ENCODE measurements at regions of chr20 and their contacts with region 1.

Region 1: GRCh38 chr20:36199345-36200257 is 36.7 kb upstream of the AAR2 start:
- DNase-seq: peak; percentile 58
- ATAC-seq: peak; percentile 89
- H3K4me3 Mint-ChIP-seq: no peak overlapping the region
- H3K27ac Mint-ChIP-seq: no peak overlapping the region
- H3K4me1 Mint-ChIP-seq: peaks cover 8% of the 10 kb centered on the region
- H3K27me3 Mint-ChIP-seq: peaks cover 3% of the 10 kb centered on the region
- CTCF ChIP-seq: no peak

Region 2: DNA sequence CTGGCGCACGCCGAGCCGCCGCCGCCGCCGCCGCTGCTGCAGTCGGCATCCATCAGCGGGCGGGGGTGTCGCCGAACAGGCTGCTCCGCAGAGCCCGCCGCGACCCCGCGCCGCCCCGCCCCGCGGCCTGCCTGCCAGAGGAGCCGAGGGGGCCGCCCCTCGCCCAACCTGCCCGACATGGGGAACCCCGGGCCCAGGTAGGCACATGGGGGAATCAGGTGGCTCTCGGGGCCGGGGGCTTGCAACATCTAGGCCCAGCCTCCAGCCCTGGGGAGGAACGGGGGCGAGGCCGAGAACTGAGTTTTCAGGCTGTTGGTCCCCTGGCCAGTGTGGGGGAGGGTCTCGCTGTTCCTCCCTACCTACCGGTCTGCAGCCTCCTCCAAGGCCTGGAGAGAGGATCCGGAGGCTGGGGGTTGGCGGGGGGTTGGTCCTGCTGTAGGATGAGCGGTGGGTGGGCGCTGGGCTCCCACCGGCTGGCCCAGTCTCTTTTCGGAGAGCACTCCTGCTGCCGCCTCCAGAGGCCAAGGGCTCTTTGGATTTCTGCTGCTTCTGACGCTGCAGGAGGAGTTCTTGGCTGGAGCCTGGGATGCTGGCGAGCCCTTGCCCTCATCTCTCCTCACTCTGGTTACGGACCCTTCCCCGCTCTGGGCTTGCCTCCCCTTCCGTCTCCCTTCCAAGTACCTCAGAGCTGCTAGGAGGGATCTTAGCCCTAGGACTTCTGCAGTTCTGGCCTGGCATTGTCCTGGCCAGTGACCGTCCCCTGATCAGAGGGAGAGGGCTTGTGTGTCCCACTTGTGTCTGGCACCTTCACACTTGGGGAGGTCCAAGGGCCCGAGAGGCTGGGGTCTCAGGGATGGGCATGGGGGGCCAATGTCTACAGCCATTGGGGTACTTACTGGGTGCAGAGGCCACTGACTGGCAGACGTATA is 44.6 kb before region 1 on chr20 and contains the start of gene EPB41L1:
- CTCF ChIA-PET with region 1: interaction called, 26 read pairs
- POLR2A ChIA-PET with region 1: no interaction called
- intact Hi-C with region 1: loop called (anchors 1 kb)
- DNase-seq: no peak
- ATAC-seq: no peak
- H3K4me3 Mint-ChIP-seq: peak within 1 kb of the TSS; percentile 59
- H3K27ac Mint-ChIP-seq: no peak within 1 kb of the TSS
- H3K4me1 Mint-ChIP-seq: peaks cover 12% of the 10 kb centered on the region
- H3K27me3 Mint-ChIP-seq: peaks cover 23% of the 10 kb centered on the region
- CTCF ChIP-seq: no peak
- total RNA-seq, gene EPB41L1: 0.49 and 0.64 TPM in 2 replicates

Region 3: GRCh38 chr20:36235892-36236785 is 36.5 kb after region 1 on chr20 and contains the start of gene AAR2:
- CTCF ChIA-PET with region 1: interaction called, 5 read pairs
- POLR2A ChIA-PET with region 1: no interaction called
- intact Hi-C with region 1: loop called (anchors 2 kb)
- DNase-seq: peak; percentile 67
- ATAC-seq: peak; percentile 95
- H3K4me3 Mint-ChIP-seq: peak within 1 kb of the TSS; percentile 94
- H3K27ac Mint-ChIP-seq: peak within 1 kb of the TSS; percentile 86
- H3K4me1 Mint-ChIP-seq: peaks cover 34% of the 10 kb centered on the region
- H3K27me3 Mint-ChIP-seq: peaks cover 9% of the 10 kb centered on the region
- CTCF ChIP-seq: no peak
- total RNA-seq, gene AAR2: 25.9 and 27.4 TPM in 2 replicates

Region 4: DNA sequence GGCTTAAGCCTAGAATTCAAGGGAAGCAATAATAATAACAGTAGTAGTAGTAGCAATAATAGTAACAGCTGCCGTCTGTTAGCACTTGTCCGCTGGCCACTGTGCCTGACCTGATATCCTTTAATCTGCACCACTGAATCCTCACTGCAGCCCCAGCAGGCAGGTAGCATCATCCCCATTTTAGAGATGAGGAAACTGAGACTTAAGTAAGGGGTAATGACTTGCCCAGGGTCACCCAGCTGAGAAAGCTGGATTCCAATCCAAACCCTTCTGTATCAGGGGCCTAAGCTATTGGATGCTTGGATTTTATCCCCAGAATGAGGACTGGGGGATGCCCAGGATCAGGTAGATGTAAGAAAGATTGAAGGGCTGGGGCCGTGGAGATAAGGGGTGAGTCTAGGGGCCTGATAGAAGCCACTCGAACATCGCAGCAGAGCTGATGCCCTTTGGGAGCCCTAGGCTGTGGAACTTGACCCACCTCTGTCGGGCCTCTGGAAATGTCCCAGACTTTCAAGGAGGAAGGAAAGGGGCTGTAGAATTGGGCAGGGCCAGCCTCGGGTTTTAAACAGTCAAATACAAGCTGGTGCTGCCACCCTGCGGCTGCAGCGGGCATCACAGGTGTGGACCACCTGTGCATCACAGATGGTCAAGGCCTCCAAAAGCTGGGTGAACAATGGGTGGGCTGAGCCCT is 239.6 kb after region 1 on chr20:
- CTCF ChIA-PET with region 1: interaction called, 14 read pairs
- POLR2A ChIA-PET with region 1: no interaction called
- intact Hi-C with region 1: loop called (anchors 1 kb)
- DNase-seq: peak; percentile 58
- ATAC-seq: peak; percentile 48
- H3K4me3 Mint-ChIP-seq: no peak overlapping the region
- H3K27ac Mint-ChIP-seq: no peak overlapping the region
- H3K4me1 Mint-ChIP-seq: peaks cover 10% of the 10 kb centered on the region
- H3K27me3 Mint-ChIP-seq: peaks cover 4% of the 10 kb centered on the region
- CTCF ChIP-seq: no peak

Region 5: DNA sequence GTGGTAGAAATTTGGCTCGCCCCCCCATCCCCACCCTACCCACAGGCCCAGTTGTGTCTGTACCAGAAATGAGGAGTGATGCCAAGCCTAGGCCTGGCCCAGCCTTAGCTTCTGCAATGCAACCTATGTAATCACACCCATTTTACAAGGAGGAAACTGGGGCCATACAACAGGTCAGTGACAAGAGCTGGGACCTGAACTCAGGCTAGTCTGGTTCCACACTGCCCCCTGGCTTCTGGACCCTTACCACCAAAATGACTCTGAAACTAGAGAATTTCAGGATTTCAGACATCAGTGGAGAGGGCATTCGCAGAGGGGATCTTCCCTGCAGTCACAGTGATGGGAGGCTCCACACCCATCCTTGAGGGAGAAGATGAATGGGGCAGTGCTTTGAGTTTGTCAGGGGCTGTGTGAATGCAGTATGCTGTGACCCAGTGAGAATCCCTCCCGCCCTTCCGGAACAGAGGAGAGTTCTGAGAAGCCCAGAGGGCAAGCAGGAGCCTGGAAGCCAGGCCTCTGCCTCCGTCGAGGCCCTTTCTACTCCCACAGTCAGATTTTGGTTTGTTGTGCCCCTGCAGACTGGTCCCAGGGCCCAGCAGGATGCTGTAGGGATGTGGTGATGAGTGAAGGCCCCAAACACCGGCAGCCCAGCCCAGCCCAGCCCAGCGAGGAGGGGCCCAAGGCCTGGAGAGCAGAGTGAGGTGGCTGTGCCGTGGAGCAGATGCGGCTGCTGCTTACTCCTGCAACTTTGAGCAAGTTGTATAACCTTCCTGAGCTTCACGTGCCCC is 293.6 kb after region 1 on chr20:
- CTCF ChIA-PET with region 1: interaction called, 7 read pairs
- POLR2A ChIA-PET with region 1: no interaction called
- intact Hi-C with region 1: loop called (anchors 2 kb)
- DNase-seq: no peak
- ATAC-seq: no peak
- H3K4me3 Mint-ChIP-seq: no peak overlapping the region
- H3K27ac Mint-ChIP-seq: no peak overlapping the region
- H3K4me1 Mint-ChIP-seq: peaks cover 32% of the 10 kb centered on the region
- H3K27me3 Mint-ChIP-seq: no peaks in the 10 kb centered on the region
- CTCF ChIP-seq: no peak

Region 6: GRCh38 chr20:36754656-36755222 is 555.1 kb after region 1 on chr20:
- CTCF ChIA-PET with region 1: interaction called, 12 read pairs
- POLR2A ChIA-PET with region 1: no interaction called
- intact Hi-C with region 1: loop called (anchors 1 kb)
- DNase-seq: no peak
- ATAC-seq: peak; percentile 60
- H3K4me3 Mint-ChIP-seq: no peak overlapping the region
- H3K27ac Mint-ChIP-seq: peak overlapping the region; percentile 61
- H3K4me1 Mint-ChIP-seq: peaks cover 33% of the 10 kb centered on the region
- H3K27me3 Mint-ChIP-seq: no peaks in the 10 kb centered on the region
- CTCF ChIP-seq: no peak

Region 7: GRCh38 chr20:36919715-36920333 is 720.2 kb after region 1 on chr20:
- CTCF ChIA-PET with region 1: no interaction called
- POLR2A ChIA-PET with region 1: no interaction called
- intact Hi-C with region 1: loop called (anchors 2 kb)
- DNase-seq: no peak
- ATAC-seq: peak; percentile 71
- H3K4me3 Mint-ChIP-seq: no peak overlapping the region
- H3K27ac Mint-ChIP-seq: no peak overlapping the region
- H3K4me1 Mint-ChIP-seq: no peaks in the 10 kb centered on the region
- H3K27me3 Mint-ChIP-seq: no peaks in the 10 kb centered on the region
- CTCF ChIP-seq: peak; percentile 91